ENCODE measurements at regions of chr4 and their contacts with region 1.

Region 1: DNA sequence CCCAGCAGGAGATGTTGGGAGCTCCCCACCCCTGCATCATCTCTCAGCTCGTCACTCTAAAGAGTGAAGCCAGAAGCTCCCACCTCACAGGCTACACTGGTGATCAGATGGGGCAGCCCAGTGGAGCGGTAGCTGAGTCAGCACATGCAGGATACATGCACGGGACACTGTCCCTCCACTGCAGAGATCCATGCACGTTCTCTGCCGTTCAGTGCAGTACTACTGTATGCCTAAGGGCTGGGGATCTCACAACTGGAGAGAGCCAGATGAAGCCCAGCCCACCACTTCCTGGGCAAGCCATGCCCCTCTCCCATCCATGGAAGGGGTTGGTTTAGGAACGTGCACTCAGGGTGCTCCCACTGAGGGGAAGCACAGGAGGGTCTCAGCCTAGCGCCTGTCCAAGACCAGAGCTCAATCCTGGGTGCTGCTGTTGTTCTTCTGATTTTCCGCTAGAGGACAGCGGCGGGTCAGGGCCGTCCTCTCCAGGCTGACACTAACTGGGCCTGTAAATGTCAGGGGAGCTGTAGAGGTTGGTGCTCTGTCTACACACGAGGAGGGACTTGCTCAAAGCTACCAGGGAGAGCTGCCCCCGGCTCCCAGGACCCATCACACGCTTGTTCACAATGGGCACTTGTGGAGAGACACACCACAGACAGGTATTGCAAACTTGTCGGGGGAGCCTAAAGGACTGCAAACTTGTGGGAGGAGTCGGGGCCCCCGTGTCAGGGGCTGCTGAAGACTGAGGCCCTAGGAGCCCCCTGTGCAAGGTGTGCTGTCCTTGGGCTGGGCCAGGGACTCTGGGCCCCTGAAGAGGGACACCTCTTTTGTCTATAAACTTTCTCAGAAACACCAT is 18.2 kb upstream of the ABLIM2 start:
- DNase-seq: peak; percentile 64
- H3K4me3 Mint-ChIP-seq: no peak overlapping the region
- H3K27ac Mint-ChIP-seq: no peak overlapping the region
- H3K4me1 Mint-ChIP-seq: peaks cover 5% of the 10 kb centered on the region
- H3K27me3 Mint-ChIP-seq: peaks cover under 1% of the 10 kb centered on the region

Region 2: DNA sequence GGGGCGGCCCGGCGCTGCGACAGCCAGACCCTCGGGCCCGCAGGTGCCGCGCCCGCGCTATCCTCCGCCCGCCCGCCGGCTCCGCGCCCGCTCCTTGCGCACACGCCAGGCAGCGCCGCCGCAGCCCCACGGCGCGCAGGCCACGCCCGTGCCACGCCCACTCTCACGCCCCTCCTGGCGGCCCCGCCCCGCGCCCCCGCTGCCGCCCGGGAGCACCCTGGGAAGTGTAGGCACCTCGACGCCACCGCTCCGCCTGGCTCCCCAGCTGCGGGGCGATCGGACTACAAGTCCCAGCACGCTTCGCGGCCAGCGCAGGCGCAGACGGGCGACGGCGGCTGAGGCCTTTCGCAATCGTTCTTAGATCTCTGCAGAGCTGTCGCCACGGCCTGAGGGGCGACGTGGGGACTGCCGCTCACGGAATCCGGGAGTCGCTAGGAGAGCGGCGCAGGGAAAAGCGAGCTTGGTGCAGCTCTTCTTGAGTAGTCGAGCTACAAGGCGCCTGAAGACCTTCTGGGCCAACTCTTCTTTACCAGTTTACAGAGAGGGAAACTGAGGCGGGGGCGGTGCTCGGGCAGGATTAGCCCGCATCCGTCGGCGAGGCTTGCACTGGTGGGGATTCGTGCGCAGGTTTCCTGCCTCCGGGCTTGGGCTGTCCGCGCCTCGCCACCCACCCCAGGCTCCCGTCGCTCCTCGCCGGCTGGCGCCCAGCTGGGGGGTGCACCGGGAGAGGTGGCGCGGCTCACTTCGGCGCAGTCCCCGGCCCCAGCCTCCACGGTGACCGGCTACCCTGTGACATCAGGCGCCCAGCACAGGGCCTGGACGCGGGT is 17.9 kb before region 1 on chr4 and contains the start of gene ABLIM2:
- CTCF ChIA-PET with region 1: interaction called, 11 read pairs
- POLR2A ChIA-PET with region 1: no interaction called
- intact Hi-C with region 1: no loop called
- DNase-seq: peak; percentile 99
- H3K4me3 Mint-ChIP-seq: peak within 1 kb of the TSS; percentile 99
- H3K27ac Mint-ChIP-seq: peak within 1 kb of the TSS; percentile 57
- H3K4me1 Mint-ChIP-seq: peaks cover 16% of the 10 kb centered on the region
- H3K27me3 Mint-ChIP-seq: peaks cover 5% of the 10 kb centered on the region
- total RNA-seq, gene ABLIM2: 0.55 to 0.63 TPM

Region 3: DNA sequence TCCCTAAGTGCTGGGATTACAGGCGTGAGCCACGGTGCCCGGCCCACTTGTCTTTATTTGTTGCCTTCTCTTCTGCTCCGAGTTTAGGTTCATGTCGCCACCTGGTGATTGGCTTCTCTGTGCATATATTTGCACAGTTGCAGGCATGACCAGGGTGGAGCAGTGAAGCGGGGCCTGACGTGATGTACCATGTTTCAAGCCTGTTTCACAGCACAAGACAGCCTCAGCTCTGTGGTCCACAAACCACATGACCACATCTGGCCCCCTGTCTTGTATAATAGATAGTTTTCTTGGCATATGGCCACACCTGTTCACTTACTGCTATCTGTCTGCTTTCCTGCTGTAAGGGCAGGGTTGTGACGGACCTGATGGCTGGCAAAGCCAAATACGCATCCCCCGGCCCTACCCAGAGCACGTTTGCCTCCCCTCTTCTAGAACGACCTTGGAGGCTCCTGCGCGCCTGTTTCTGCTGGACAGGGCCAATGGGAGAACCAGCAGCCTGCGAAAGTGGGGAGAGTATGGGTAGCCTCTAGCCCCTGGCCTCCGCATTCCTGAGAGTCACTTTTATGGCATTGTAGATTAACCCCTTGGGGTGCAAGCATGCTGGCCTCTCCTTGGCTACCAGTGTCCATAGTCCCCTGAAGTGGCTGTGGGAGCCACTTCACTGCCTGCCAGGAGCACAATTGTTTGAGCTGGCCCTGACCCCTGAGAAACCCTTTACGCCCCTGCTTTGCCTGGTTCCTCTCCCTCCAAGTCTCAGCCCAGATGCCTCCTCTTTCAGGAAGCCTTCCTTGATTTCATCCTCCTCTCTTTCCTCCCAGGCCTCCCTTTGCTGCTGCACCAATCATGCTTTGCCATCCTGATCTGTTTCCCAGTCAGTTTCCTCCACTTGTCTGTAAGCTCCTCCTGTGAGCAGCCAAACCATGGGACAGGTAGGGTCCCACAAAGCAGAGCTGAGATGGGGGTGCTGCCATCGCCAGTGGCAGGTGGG is 16.3 kb after region 1 on chr4:
- CTCF ChIA-PET with region 1: interaction called, 17 read pairs
- POLR2A ChIA-PET with region 1: no interaction called
- intact Hi-C with region 1: loop called (anchors 2 kb)
- DNase-seq: peak; percentile 37
- H3K4me3 Mint-ChIP-seq: no peak overlapping the region
- H3K27ac Mint-ChIP-seq: no peak overlapping the region
- H3K4me1 Mint-ChIP-seq: no peaks in the 10 kb centered on the region
- H3K27me3 Mint-ChIP-seq: no peaks in the 10 kb centered on the region

Region 4: DNA sequence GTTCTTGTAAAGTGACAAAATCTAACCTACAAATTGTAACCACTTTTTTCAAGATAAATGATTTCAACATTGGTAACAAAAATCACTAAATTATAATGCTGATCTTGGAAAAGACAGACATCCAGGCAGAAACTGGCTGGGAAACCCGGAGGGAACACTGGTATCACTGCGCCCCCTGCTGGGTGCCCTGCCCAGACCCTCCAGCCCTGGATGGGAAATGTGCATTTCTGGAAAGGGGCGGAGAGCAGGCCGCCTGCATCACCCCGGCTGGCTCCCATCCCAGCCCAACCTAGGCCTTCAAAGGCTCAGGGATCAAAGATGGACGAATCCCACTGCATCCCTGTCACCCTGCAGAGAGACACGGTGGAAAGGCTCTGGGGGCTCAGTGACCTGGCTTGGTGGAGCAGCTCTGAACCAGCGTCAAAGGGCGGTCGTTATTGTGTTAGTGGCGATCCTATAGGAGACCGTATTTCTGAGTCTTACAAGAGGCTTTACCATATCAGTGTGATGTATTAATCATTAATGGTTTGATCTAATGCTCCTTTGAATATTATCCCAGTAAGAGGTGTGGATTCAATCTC is 226.5 kb after region 1 on chr4:
- CTCF ChIA-PET with region 1: interaction called, 19 read pairs
- POLR2A ChIA-PET with region 1: no interaction called
- intact Hi-C with region 1: loop called (anchors 2 kb)
- DNase-seq: peak; percentile 63
- H3K4me3 Mint-ChIP-seq: no peak overlapping the region
- H3K27ac Mint-ChIP-seq: no peak overlapping the region
- H3K4me1 Mint-ChIP-seq: no peaks in the 10 kb centered on the region
- H3K27me3 Mint-ChIP-seq: no peaks in the 10 kb centered on the region

Measured in activated CD4-positive, alpha-beta memory T cell treated with anti-CD3 and anti-CD28 coated beads for 36 hours (primary cell).